ENCODE measurements at regions of chr9 and their contacts with region 1.

Region 1: DNA sequence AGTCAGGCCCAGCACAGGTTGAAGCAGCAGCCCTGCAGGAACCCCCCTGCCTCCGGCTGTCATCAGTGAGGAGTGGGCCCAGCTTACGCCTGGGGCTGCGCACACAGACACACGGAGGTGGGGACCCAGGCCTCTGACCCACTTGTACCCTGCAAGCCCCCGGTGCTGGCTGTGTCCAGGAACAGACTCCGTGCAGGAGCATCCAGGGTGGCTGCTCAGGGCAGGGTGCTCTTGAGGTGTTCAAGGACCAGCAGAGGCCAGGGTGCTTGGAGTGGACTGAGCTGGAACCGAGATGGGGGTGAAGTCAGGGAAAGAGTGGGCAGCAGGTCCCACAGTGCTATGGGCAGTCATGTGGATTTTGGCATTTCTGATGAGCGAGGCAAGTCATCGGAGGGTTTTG is 199.5 kb downstream of the CACNA1B start:
- DNase-seq: no peak
- H3K4me3 ChIP-seq: no peak overlapping the region
- H3K27ac ChIP-seq: no peak overlapping the region
- H3K4me1 ChIP-seq: no peaks in the 10 kb centered on the region
- H3K27me3 ChIP-seq: no peaks in the 10 kb centered on the region
- CTCF ChIP-seq: no peak

Region 2: DNA sequence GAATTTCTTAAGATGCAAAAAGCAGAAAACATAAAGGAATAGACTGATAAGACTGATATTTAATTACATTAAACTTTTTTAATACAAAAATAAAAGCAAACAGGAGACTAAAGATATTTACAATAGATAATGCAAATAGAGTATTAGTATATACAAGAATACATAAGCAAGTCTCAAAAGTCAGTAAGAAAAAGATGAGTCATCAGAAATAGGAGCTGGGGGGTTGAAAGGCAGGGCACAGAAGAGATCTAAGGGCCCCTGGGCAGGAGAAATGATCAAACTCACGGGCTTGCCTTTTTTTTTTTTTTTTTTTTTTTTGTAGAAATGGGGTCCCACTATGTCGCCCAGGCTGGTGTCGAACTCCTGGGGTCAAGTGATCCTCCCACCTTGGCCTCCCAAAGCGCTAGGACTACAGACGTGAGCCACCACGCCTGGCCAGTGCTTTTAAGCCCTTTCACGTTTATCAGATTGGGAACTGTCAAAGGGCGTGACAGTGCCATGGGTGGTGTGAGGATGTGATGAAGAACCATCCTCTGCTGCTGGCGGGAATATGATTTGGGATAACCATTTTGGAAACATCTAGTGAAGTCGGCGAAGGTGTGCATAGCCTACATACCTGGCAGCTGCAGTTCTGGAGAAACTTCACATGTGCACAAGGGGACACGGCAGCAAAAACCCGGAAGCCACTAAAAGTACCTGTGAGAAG is 73.5 kb before region 1 on chr9:
- CTCF ChIA-PET with region 1: no interaction called
- dilution Hi-C with region 1: no loop called
- in situ Hi-C with region 1: no loop called
- intact Hi-C with region 1: no loop called
- DNase-seq: no peak
- H3K4me3 ChIP-seq: no peak overlapping the region
- H3K27ac ChIP-seq: no peak overlapping the region
- H3K4me1 ChIP-seq: no peaks in the 10 kb centered on the region
- H3K27me3 ChIP-seq: no peaks in the 10 kb centered on the region
- CTCF ChIP-seq: no peak

Region 3: DNA sequence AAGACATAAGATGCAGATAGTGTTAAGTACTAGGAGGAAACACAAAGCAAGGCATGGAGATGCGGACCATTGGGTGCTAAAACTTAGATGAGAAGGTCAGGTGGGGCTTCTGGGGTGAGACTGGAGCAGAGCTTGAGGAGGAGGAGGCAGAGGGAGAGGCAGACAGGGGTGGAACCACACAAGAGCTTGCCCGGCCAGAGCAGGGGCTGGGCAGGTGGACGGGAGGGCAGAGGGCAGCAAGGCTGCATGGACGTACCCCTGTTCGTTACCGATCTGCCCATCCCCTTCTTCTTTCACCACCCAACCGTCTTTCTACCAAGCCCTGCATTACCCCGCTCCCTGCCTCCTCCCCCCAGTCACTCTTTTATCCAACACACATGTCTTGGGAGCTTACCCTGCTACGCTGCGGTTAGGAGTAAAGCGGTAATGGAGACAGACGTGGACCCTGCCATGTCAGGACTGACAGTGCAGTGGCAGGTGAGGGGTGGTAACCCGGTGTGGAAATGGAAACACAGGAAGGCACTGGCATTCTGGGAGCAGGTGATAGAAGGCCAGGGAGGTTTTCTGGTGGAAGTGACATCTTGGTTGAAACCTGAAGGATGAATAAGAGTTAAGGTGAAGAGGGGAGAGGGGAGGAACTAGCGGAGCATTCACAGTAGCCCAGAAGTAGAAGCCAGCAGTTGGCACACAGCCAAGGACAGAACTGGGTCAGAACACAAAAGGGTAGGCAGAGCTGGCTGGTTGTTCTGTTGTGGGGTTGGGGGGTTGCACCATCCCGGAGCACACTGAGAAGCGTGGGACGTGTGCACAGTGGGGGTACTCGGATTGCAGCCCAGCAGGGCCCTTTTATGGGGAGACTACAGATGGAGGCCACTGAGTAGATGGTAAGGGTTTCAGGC is 32.4 kb before region 1 on chr9:
- CTCF ChIA-PET with region 1: no interaction called
- dilution Hi-C with region 1: loop called (anchors 5 kb)
- in situ Hi-C with region 1: no loop called
- intact Hi-C with region 1: no loop called
- DNase-seq: no peak
- H3K4me3 ChIP-seq: no peak overlapping the region
- H3K27ac ChIP-seq: no peak overlapping the region
- H3K4me1 ChIP-seq: no peaks in the 10 kb centered on the region
- H3K27me3 ChIP-seq: no peaks in the 10 kb centered on the region
- CTCF ChIP-seq: no peak

Measured in mammary epithelial cell (primary cell).